Left ventricle myocardium superior (tissue), 1 donor: ENCODE measurements at regions of chr11 and their contacts with region 1.

Region 1: GRCh38 chr11:120172054-120172911 is 34.4 kb upstream of the TRIM29 start:
- DNase-seq: peak; percentile 77
- ATAC-seq: peak; percentile 62

Region 2: DNA sequence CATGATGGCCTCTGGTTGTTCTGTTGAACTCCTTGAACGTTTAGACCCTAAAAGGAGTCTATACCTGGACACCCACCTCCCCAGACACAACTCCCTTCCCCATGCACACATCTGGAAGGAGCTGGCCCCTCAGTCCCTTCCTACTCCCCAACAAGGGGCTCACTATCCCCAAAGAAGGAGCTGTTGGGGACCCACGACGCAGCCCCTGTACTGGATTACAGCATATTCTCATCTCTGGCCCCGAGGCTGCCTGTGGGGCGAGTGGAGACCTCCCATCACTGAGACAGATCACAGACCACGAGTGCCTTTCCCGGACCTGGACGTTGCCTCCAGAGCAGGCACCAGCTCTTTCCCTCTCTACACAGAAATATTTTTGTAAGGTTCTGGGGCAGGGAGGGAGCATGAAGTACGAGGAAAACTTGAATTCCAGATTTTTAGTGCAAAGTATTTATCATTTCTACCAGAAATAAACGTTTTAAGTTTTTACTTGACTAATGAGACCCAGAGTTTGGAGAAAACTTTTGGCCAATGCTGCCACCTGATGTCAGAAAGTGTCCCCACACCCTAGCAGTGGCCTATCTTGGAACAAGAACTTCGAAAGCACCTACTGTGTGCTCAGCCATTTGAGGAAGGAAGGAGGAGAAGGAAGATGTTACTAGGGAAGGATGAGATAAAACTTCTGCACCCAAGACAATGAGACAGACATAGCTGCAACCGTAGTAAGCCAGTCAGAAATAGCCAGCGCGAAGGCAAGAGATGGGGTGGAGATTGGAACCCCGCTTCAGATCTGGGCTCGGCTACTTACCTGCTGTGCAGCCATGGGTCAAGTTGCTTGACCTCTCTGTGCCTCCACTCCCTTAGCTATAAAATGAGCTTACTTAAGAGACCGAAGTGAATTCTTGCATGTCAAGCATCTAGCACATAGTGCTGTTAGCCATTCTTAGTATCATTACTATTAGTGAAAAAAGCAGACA is 57.5 kb after region 1 on chr11:
- intact Hi-C with region 1: loop called (anchors 2 kb)
- DNase-seq: peak; percentile 23
- ATAC-seq: no peak

Region 3: GRCh38 chr11:120303004-120303637 is 130.8 kb after region 1 on chr11:
- intact Hi-C with region 1: loop called (anchors 10 kb)
- DNase-seq: peak; percentile 67
- ATAC-seq: peak; percentile 84

Region 4: GRCh38 chr11:120432056-120433018 is 260.1 kb after region 1 on chr11:
- intact Hi-C with region 1: no loop called
- DNase-seq: no peak
- ATAC-seq: peak; percentile 95

Region 5: GRCh38 chr11:121153472-121153871 is 981.2 kb after region 1 on chr11:
- intact Hi-C with region 1: loop called (anchors 10 kb)
- DNase-seq: no peak
- ATAC-seq: no peak